Gastrocnemius medialis (tissue), 4 donors: ENCODE measurements at regions of chr17 and their contacts with region 1.

Region 1: DNA sequence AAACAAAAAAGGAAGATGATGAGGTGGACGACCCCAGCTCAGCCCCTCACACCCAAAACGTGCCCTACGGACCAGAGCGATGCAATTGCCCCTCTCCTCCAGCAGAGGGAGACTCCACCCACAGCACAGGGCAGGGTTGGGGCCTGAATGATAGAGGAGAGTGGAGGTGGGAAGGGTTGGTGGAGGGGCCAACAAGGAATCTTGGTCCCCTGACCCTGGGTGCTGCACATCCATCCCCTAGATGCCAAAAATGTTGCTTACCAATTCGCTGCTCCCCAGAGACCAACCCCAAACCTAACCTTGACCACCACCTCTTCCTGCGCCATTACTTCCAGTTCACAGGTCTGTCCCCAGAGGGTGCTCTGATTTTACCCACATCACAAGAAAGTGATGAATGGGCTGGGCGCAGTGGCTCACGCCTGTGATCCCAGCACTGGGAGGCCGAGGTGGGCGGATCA is 12.9 kb downstream of the P2RX5 start:
- DNase-seq: no peak
- ATAC-seq: peak; percentile 62 to 76
- H3K4me3 ChIP-seq: no peak overlapping the region
- H3K27ac ChIP-seq: no peak overlapping the region
- H3K4me1 ChIP-seq: no peaks in the 10 kb centered on the region
- H3K27me3 ChIP-seq: no peaks in the 10 kb centered on the region
- CTCF ChIP-seq: peak; percentile 82 to 90 (median 86)
- POLR2A ChIP-seq: no peak

Region 2: DNA sequence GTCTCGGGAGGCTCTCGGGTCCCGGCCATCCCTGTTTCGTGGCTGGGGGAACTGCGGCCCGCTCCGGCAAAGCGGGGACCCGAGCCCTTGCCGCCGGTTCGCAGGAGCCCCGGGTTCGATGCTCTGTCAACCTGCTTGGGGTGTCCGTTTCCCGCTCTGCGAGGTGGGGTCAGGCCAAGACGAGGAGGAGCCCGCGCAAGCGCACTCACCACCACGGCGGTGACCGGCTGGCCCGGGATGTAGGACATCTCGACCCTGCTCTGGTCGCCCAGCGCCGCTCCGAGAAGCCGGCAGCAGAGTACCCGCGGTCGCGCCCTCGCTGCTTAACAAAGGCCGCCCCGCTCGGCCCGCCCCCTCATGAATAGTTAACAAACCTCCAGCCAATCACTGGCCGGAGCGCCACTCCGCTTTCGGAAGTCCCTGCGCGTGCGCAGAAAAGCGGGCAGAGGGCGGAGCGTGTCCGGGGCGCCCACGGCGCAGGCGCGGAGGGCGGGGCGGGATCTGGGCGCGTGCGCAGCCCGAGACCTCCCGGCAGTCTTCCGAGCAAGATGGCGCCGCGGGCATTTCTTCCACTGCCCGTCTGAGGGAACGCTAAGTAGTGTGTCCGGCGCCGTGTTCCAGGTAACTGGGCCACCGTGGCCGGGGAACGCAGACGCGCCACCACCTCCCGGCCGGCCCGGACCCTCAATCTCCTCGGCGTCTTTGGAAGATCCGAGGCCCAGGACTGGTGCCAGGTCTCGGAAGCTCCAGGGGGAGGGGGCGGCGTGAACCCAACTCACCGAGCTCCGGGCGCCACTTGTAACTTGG is 14.6 kb before region 1 on chr17 and contains the starts of genes EMC6 and TAX1BP3:
- in situ Hi-C with region 1: no loop called
- intact Hi-C with region 1: no loop called
- DNase-seq: peak; percentile 98
- ATAC-seq: peak; percentile 80 to 89
- H3K4me3 ChIP-seq: peak within 1 kb of the TSS; percentile 80 to 100 (median 95)
- H3K27ac ChIP-seq: peak within 1 kb of the TSS; percentile 93 to 97 (median 96)
- H3K4me1 ChIP-seq: peaks cover 36 to 37% of the 10 kb centered on the region in 2 donors
- H3K27me3 ChIP-seq: no peaks in the 10 kb centered on the region
- CTCF ChIP-seq: no peak
- POLR2A ChIP-seq: peak; percentile 95 to 99
- total RNA-seq, gene EMC6: 40.6 to 73.8 (median 54.5) TPM
- total RNA-seq, gene TAX1BP3: 24.1 to 45.1 (median 33.8) TPM

Region 3: GRCh38 chr17:3723556-3724369 is 40.7 kb after region 1 on chr17 and contains the start of gene HASPIN:
- in situ Hi-C with region 1: no loop called
- intact Hi-C with region 1: loop called (anchors 5 kb)
- DNase-seq: peak; percentile 70 to 81
- ATAC-seq: peak; percentile 85 to 89
- H3K4me3 ChIP-seq: peak within 1 kb of the TSS; percentile 90 to 98 (median 92)
- H3K27ac ChIP-seq: peak within 1 kb of the TSS; percentile 92 to 96 (median 92)
- H3K4me1 ChIP-seq: peaks cover 16 to 26% of the 10 kb centered on the region in 2 donors
- H3K27me3 ChIP-seq: no peaks in the 10 kb centered on the region
- CTCF ChIP-seq: peak; percentile 30 to 57 (median 36)
- POLR2A ChIP-seq: peak; percentile 66
- total RNA-seq, gene HASPIN: 0.20 to 1.3 (median 0.24) TPM

Region 4: DNA sequence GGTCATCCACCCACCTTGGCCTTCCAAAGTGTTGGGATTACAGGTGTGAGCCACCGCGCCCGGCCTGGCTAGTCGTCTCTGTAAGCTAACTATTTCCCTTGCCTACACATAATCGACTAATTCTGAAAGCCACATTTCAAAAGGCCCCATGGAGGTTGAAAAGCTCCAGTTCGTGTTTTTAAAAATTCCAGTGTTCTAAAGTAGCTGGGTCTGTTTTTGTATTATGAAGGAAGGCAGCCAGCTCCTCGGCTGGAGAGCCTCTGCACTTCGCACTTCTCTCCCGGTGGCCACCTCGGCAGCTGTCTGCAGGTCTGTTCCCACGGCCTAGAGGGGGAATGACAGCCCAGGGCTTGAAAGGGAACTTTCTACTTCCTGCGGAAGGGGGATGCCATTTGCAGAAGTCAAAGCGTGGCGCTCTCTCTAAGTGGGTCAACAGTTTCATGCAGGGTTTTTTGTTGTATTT is 57.6 kb after region 1 on chr17:
- in situ Hi-C with region 1: no loop called
- intact Hi-C with region 1: no loop called
- DNase-seq: no peak
- ATAC-seq: no peak
- H3K4me3 ChIP-seq: no peak overlapping the region
- H3K27ac ChIP-seq: no peak overlapping the region
- H3K4me1 ChIP-seq: peaks cover 4 to 11% of the 10 kb centered on the region in 2 donors
- H3K27me3 ChIP-seq: no peaks in the 10 kb centered on the region
- CTCF ChIP-seq: no peak
- POLR2A ChIP-seq: no peak

Region 5: DNA sequence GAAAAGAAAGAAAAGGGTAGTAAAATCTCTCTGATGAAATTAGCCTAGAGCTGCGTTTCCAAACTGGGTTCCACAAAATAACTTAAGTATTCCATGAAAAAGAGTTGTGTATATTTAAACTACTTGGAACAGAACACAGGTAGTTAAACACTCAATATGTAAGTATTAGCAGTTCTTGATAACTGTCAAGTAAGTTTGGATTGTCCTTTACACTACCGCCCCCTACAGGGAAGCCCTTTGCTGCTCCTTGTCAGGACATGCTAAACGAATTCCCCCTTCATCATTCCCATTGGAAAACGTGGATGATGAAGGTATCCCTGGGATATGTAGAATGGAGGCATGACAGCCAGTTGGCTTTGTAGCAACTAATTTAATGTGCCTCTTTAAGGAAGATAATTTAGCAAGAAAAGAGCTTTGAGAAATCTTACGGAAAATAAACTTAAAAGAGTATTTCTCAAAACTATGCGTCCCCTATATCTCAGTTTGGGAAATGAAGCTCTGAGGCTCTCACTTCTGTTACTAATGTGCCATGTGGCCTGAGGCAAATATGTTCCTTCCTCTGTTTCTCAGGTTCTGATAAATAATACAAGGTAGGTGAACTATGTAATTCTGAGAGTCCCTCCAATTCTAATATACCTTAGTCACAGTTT is 144.2 kb after region 1 on chr17:
- in situ Hi-C with region 1: no loop called
- intact Hi-C with region 1: loop called (anchors 5 kb)
- DNase-seq: peak in 1 of 2 donors; percentile 31
- ATAC-seq: no peak
- H3K4me3 ChIP-seq: no peak overlapping the region
- H3K27ac ChIP-seq: no peak overlapping the region
- H3K4me1 ChIP-seq: peaks cover 17 to 24% of the 10 kb centered on the region in 2 donors
- H3K27me3 ChIP-seq: no peaks in the 10 kb centered on the region
- CTCF ChIP-seq: peak in 4 of 5 experiments; percentile 17 to 49 (median 23)
- POLR2A ChIP-seq: no peak